ENCODE measurements at regions of chr12 and their contacts with region 1.

Region 1: DNA sequence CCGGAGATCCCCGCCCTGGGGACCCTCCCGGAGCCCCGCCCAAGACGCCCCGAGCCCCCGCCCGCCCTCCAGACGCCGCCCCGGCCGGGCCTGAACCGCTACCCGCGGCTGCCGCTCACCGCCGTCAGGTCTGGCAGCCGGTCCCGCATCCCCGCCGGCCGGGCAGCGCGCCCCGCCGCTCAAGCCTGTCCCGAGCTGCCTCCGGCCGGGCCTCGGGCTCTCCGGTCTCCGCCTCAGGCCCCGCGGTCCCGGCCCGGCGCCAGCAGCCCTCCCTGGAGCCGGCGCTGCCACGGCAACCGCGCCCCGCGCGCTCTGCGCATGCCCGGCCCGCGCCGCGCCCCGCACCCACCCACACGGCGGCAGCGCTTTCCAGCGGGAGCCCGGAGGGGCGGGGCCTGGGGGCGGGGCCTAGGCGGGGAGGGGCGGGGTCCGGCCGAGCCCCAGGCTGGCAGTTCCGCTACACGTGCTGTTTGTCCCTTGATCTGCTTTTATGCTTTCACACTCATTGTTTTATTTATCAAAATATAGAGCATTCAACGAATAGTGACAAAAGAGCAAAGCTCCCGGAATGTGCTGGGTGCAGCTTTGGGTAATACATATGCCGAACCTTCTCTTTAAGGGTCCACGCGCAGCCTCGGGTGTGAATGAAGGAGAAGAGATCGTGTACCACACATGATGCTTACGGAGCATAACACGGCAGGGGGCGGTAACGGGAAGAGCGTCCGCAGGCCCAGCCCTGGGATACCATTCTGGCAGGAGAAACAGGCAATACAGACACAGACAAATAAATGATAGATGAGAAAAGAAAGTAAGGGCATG is at the start of gene STX2:
- DNase-seq: peak; percentile 82 to 86
- ATAC-seq: peak; percentile 85 to 89
- H3K4me3 ChIP-seq: peak within 1 kb of the TSS; percentile 75
- H3K27ac ChIP-seq: peak within 1 kb of the TSS; percentile 94 to 96
- H3K4me1 ChIP-seq: peaks cover 17% of the 10 kb centered on the region
- CTCF ChIP-seq: peak; percentile 39
- EP300 ChIP-seq: no peak
- POLR2A ChIP-seq: peak; percentile 32
- RAD21 ChIP-seq: peak in 1 of 2 experiments; percentile 26; a peak in 1 of 5 replicates
- polyA plus RNA-seq, gene STX2: 39.4 and 51.3 TPM in 2 replicates

Region 2: GRCh38 chr12:129727098-129727497 is 1112.1 kb before region 1 on chr12:
- CTCF ChIA-PET with region 1: no interaction called
- POLR2A ChIA-PET with region 1: no interaction called
- DNase-seq: no peak
- ATAC-seq: no peak
- H3K4me3 ChIP-seq: no peak overlapping the region
- H3K27ac ChIP-seq: no peak overlapping the region
- H3K4me1 ChIP-seq: no peaks in the 10 kb centered on the region
- CTCF ChIP-seq: no peak
- EP300 ChIP-seq: no peak
- POLR2A ChIP-seq: no peak
- RAD21 ChIP-seq: no peak

Region 3: DNA sequence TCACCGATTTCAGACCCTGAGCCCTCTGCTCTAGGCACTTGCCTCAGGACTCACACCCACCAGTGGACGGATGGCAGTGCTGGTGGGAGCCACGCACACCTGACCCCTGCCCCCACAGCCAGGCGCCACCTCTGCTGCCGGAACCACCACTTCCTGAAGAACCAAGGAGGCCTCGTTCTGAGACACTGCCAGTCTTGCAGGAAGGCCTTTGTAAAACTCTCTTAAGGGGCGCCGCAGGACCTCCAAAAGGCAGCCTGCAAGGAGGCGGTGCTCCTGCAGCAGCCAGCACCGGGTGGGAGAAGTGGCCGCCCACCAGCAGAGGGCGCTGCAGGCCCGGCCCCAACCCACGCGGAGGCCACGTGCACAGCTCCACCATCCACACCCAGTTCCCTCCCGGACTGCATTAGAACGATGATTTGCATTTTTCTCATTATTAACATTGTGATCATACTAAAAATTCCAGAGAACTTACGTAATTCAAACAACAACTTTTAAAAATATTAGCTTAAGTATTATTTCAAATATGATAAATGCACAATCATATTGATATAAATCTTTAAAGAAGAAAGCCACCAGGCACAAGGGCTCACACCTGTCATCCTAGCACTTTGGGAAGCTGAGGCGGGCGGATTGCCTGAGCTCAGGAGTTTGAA is 12.9 kb before region 1 on chr12:
- CTCF ChIA-PET with region 1: interaction called, 40 read pairs
- POLR2A ChIA-PET with region 1: no interaction called
- DNase-seq: peak; percentile 53 to 76
- ATAC-seq: peak; percentile 89 to 96
- H3K4me3 ChIP-seq: no peak overlapping the region
- H3K27ac ChIP-seq: peak overlapping the region in 1 of 2 experiments; percentile 13; a peak in 1 of 6 replicates
- H3K4me1 ChIP-seq: peaks cover 13% of the 10 kb centered on the region
- CTCF ChIP-seq: peak; percentile 49
- EP300 ChIP-seq: no peak
- POLR2A ChIP-seq: no peak
- RAD21 ChIP-seq: peak; percentile 44 to 53; a peak in 4 of 5 replicates

Region 4: GRCh38 chr12:131044760-131045381 is 205.7 kb after region 1 on chr12:
- CTCF ChIA-PET with region 1: no interaction called
- POLR2A ChIA-PET with region 1: no interaction called
- DNase-seq: no peak
- ATAC-seq: no peak
- H3K4me3 ChIP-seq: no peak overlapping the region
- H3K27ac ChIP-seq: no peak overlapping the region
- H3K4me1 ChIP-seq: no peaks in the 10 kb centered on the region
- CTCF ChIP-seq: no peak
- EP300 ChIP-seq: no peak
- POLR2A ChIP-seq: no peak
- RAD21 ChIP-seq: no peak

Measured in A549 (cell line).